Activated CD4-positive, alpha-beta memory T cell treated with anti-CD3 and anti-CD28 coated beads, Interleukin-2, amount 10 ng/mL, durations not matched to agents 7 days and 5 days (primary cell): ENCODE measurements at regions of chr9 and their contacts with region 1.

Region 1: DNA sequence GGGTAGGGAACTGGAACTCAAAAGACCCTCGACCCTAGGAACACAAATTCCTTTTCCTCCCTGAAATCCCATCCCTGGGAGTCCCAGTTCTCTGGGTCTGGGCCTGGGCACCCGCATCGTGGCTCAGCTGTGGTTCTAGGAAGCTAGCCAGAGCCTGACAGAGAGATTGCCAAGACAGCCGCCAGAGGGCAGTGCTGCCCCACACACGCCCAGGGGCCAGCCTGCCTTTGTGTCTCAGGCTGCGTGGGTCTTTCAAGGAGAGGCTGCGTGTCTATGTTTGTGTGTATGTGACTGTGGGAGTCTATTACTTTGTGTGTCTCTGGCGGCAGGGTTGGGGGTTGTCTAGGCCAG is 32.0 kb upstream of the TTLL11 start:
- DNase-seq: peak; percentile 81
- H3K4me3 Mint-ChIP-seq: no peak overlapping the region
- H3K27ac Mint-ChIP-seq: no peak overlapping the region
- H3K4me1 Mint-ChIP-seq: peaks cover 10% of the 10 kb centered on the region
- H3K27me3 Mint-ChIP-seq: peaks cover 25% of the 10 kb centered on the region

Region 2: GRCh38 chr9:122075135-122076030 is 49.8 kb before region 1 on chr9:
- CTCF ChIA-PET with region 1: no interaction called
- POLR2A ChIA-PET with region 1: no interaction called
- DNase-seq: no peak
- H3K4me3 Mint-ChIP-seq: no peak overlapping the region
- H3K27ac Mint-ChIP-seq: no peak overlapping the region
- H3K4me1 Mint-ChIP-seq: no peaks in the 10 kb centered on the region
- H3K27me3 Mint-ChIP-seq: no peaks in the 10 kb centered on the region

Region 3: DNA sequence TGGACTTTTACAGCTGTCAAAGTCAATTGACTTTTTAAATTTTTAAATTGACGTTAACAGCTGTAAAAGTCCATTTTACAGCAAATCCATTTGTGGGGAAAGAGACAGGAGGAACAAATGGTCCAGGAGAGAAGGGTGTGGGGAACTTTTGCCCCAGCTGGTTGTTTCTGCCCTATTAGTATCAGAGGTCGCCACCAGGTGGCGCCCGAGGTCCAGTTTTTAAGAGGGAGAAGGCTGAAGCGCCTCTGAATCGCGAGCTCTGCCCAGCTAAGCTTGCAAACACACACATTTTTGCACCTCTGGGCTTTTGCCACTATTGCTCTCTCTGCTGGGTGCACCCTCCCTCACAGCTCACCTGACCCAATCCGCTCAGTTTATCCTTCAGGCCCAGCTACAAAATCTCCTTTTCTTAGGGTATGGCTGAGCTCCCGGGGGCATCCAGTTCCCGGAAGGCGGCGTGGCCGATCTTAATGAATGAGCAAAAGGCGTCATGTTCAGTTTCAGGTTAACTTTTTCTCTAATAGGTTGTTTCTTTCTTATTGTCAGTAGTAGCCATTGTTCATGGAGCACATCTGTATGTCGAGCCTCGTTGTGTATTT is 25.8 kb before region 1 on chr9:
- CTCF ChIA-PET with region 1: interaction called, 173 read pairs
- POLR2A ChIA-PET with region 1: interaction called, 5 read pairs
- DNase-seq: peak; percentile 82
- H3K4me3 Mint-ChIP-seq: peak overlapping the region; percentile 49
- H3K27ac Mint-ChIP-seq: no peak overlapping the region
- H3K4me1 Mint-ChIP-seq: peaks cover 14% of the 10 kb centered on the region
- H3K27me3 Mint-ChIP-seq: peaks cover 30% of the 10 kb centered on the region

Region 4: GRCh38 chr9:122144836-122145591 is 19.9 kb after region 1 on chr9:
- CTCF ChIA-PET with region 1: interaction called, 18 read pairs
- POLR2A ChIA-PET with region 1: no interaction called
- DNase-seq: no peak
- H3K4me3 Mint-ChIP-seq: no peak overlapping the region
- H3K27ac Mint-ChIP-seq: no peak overlapping the region
- H3K4me1 Mint-ChIP-seq: no peaks in the 10 kb centered on the region
- H3K27me3 Mint-ChIP-seq: no peaks in the 10 kb centered on the region

Region 5: GRCh38 chr9:122159026-122159924 is 34.1 kb after region 1 on chr9 and contains the starts of genes MORN5 and NDUFA8:
- CTCF ChIA-PET with region 1: interaction called, 19 read pairs
- POLR2A ChIA-PET with region 1: no interaction called
- DNase-seq: peak; percentile 96
- H3K4me3 Mint-ChIP-seq: peak within 1 kb of the TSS; percentile 97
- H3K27ac Mint-ChIP-seq: peak within 1 kb of the TSS; percentile 84
- H3K4me1 Mint-ChIP-seq: peaks cover 26% of the 10 kb centered on the region
- H3K27me3 Mint-ChIP-seq: peaks cover 22% of the 10 kb centered on the region
- total RNA-seq, gene MORN5: not detected
- total RNA-seq, gene NDUFA8: 36.1 to 37.0 TPM

Region 6: GRCh38 chr9:122264360-122265148 is 139.4 kb after region 1 on chr9 and contains the starts of genes MRRF and RBM18:
- CTCF ChIA-PET with region 1: interaction called, 21 read pairs
- POLR2A ChIA-PET with region 1: no interaction called
- DNase-seq: peak; percentile 94
- H3K4me3 Mint-ChIP-seq: peak within 1 kb of the TSS; percentile 94
- H3K27ac Mint-ChIP-seq: peak within 1 kb of the TSS; percentile 97
- H3K4me1 Mint-ChIP-seq: peaks cover 42% of the 10 kb centered on the region
- H3K27me3 Mint-ChIP-seq: no peaks in the 10 kb centered on the region
- total RNA-seq, gene MRRF: 27.0 to 29.2 TPM
- total RNA-seq, gene RBM18: 21.6 to 25.6 TPM

Region 7: GRCh38 chr9:122350638-122351355 is 225.7 kb after region 1 on chr9:
- CTCF ChIA-PET with region 1: interaction called, 243 read pairs
- POLR2A ChIA-PET with region 1: interaction called, 6 read pairs
- DNase-seq: peak; percentile 82
- H3K4me3 Mint-ChIP-seq: no peak overlapping the region
- H3K27ac Mint-ChIP-seq: no peak overlapping the region
- H3K4me1 Mint-ChIP-seq: peaks cover 13% of the 10 kb centered on the region
- H3K27me3 Mint-ChIP-seq: peaks cover 31% of the 10 kb centered on the region

Region 8: DNA sequence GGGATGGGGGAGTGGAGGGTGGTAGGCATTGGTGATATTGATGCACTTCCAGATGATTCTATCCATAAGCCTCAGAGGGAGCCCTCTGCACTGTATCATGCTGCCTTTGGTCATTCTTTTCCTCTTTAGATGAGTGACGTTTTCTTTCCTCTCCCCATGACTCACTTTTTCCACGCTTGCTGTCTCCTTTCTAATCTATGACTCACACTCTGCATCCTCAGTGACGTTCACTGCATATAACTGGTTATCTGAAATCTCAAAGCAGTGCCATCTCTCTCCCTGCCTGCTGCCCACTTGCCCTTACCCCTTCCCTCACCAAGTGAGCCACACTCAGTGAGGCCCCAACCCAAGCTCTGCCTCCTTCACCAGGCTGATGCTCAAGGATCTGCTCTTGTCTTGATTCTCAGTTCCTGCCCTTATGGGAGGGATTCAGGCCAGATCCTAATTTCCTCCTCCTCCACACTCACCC is 277.3 kb after region 1 on chr9:
- CTCF ChIA-PET with region 1: no interaction called
- POLR2A ChIA-PET with region 1: no interaction called
- DNase-seq: peak; percentile 33
- H3K4me3 Mint-ChIP-seq: no peak overlapping the region
- H3K27ac Mint-ChIP-seq: no peak overlapping the region
- H3K4me1 Mint-ChIP-seq: peaks cover 10% of the 10 kb centered on the region
- H3K27me3 Mint-ChIP-seq: peaks cover 4% of the 10 kb centered on the region

Region 9: DNA sequence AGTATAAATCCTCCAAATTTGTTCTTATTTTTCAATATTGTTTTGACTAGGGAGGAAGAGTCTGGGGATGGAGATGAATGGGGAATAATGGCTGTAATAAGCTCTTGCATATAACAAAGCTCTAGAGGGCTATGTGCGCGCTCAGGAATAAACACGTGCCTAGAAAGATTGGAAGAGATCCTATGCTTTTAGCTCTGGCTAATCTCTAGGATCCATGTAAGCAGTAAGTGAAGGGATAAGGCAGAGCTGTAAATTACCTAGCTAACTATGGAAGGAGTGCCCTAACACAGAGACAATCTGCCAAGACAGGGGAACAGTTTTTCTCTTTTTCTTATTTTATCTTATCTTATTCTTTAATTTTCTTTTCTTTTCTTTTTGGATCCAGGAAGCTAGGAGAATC is 331.0 kb after region 1 on chr9:
- CTCF ChIA-PET with region 1: interaction called, 10 read pairs
- POLR2A ChIA-PET with region 1: no interaction called
- DNase-seq: no peak
- H3K4me3 Mint-ChIP-seq: no peak overlapping the region
- H3K27ac Mint-ChIP-seq: no peak overlapping the region
- H3K4me1 Mint-ChIP-seq: no peaks in the 10 kb centered on the region
- H3K27me3 Mint-ChIP-seq: peaks cover 38% of the 10 kb centered on the region